Ascending aorta (tissue), 2 donors: ENCODE measurements at regions of chr1 and their contacts with region 1.

Region 1: DNA sequence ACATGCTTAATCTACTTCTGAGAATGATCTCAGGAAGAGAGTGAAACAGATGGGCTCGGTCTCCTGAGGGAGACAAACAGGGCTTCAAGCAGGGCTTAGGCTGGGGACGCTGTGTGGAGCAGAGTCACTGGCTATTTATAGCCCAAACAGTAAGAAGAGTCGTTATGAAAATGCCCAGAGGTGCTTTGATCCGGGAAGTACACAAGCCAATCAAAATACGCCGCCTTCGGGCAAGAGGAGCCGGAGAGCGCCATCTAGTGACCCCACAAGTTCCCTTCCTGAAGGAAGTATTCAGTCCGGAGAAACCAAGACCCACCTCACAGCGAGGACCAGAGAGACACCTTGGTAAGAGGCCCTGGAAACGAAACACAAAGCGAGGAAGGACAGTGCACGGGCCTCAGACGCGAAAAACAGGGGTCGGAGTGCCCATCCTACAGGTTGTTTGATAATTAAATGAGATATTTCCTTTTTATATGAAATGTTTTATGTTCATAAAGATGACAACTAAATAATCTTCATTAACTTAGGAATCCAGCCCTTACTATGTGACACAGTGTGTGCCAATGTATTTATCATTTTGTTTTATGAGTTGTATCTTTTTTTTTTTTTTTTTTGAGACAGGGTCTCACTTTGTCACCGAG is 25.0 kb upstream of the SCCPDH start:
- DNase-seq: peak; percentile 53 to 94
- H3K4me3 ChIP-seq: peak overlapping the region; percentile 21 to 63
- H3K27ac ChIP-seq: peak overlapping the region in 1 of 2 donors; percentile 4
- H3K4me1 ChIP-seq: no peaks in the 10 kb centered on the region
- H3K27me3 ChIP-seq: no peaks in the 10 kb centered on the region
- CTCF ChIP-seq: peak; percentile 69 to 89 (median 73)

Region 2: GRCh38 chr1:246497331-246497915 is 201.8 kb before region 1 on chr1:
- intact Hi-C with region 1: loop called (anchors 2 kb)
- DNase-seq: no peak
- H3K4me3 ChIP-seq: no peak overlapping the region
- H3K27ac ChIP-seq: no peak overlapping the region
- H3K4me1 ChIP-seq: no peaks in the 10 kb centered on the region
- H3K27me3 ChIP-seq: no peaks in the 10 kb centered on the region
- CTCF ChIP-seq: peak; percentile 54 to 69 (median 58)